Gastrocnemius medialis (tissue), 4 donors: ENCODE measurements at regions of chr1 and their contacts with region 1.

Region 1: GRCh38 chr1:44485229-44485933 is 80.3 kb downstream of the RNF220 start:
- DNase-seq: no peak
- ATAC-seq: peak; percentile 51 to 61
- H3K4me3 ChIP-seq: peak overlapping the region in 2 of 4 donors; percentile 12 to 34
- H3K27ac ChIP-seq: peak overlapping the region; percentile 46 to 76 (median 72)
- H3K4me1 ChIP-seq: peaks cover 3 to 9% of the 10 kb centered on the region in 2 donors
- H3K27me3 ChIP-seq: no peaks in the 10 kb centered on the region
- CTCF ChIP-seq: no peak
- POLR2A ChIP-seq: no peak

Region 2: GRCh38 chr1:43622471-43622870 is 862.9 kb before region 1 on chr1:
- in situ Hi-C with region 1: no loop called
- intact Hi-C with region 1: no loop called
- DNase-seq: no peak
- ATAC-seq: no peak
- H3K4me3 ChIP-seq: no peak overlapping the region
- H3K27ac ChIP-seq: no peak overlapping the region
- H3K4me1 ChIP-seq: no peaks in the 10 kb centered on the region
- H3K27me3 ChIP-seq: no peaks in the 10 kb centered on the region
- CTCF ChIP-seq: no peak
- POLR2A ChIP-seq: no peak

Region 3: GRCh38 chr1:44275991-44276405 is 209.4 kb before region 1 on chr1:
- in situ Hi-C with region 1: no loop called
- intact Hi-C with region 1: no loop called
- DNase-seq: no peak
- ATAC-seq: no peak
- H3K4me3 ChIP-seq: no peak overlapping the region
- H3K27ac ChIP-seq: no peak overlapping the region
- H3K4me1 ChIP-seq: peaks cover 8 to 23% of the 10 kb centered on the region in 2 donors
- H3K27me3 ChIP-seq: no peaks in the 10 kb centered on the region
- CTCF ChIP-seq: no peak
- POLR2A ChIP-seq: no peak

Region 4: DNA sequence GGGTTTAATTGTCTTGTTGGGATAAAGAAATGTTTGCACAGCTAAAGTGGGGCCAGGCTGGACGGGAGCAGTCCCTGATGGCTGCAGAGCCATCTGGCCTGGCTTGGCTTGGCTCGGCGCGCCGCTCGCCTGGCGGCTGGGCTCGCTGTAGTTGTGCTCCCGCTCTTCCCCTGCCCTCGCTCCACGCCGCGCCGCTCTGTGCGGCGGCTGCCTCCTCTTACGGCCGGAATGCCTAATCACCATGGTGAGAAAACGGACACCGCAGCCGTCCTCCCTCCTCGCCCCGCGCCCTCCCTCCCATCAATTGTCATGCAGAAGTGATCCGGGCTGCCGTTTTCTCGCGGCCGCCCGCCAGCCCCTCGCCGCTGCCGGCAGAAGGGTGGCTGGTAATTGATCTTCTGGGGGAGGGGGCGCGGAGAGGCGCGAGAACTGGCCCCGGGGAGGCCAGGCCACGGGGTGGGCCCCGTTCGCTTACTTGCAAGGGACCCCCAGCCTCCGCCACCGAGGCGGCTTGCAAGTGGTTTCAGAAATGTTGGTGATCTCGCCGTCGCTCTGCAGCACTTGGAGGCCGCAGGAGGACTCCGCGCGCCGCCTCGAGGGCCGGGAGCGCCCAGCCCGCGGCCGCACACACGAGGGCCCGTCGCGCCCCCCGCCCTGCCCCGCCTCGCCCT is 67.9 kb before region 1 on chr1:
- in situ Hi-C with region 1: no loop called
- intact Hi-C with region 1: loop called (anchors 10 kb)
- DNase-seq: no peak
- ATAC-seq: peak in 1 of 2 donors; percentile 39
- H3K4me3 ChIP-seq: peak overlapping the region; percentile 24 to 52 (median 44)
- H3K27ac ChIP-seq: no peak overlapping the region
- H3K4me1 ChIP-seq: peaks cover 2 to 11% of the 10 kb centered on the region in 2 donors
- H3K27me3 ChIP-seq: peaks cover 80 to 89% (median 88%) of the 10 kb centered on the region in 3 donors
- CTCF ChIP-seq: no peak
- POLR2A ChIP-seq: no peak